ENCODE measurements at regions of chr16 and their contacts with region 1.

Region 1: DNA sequence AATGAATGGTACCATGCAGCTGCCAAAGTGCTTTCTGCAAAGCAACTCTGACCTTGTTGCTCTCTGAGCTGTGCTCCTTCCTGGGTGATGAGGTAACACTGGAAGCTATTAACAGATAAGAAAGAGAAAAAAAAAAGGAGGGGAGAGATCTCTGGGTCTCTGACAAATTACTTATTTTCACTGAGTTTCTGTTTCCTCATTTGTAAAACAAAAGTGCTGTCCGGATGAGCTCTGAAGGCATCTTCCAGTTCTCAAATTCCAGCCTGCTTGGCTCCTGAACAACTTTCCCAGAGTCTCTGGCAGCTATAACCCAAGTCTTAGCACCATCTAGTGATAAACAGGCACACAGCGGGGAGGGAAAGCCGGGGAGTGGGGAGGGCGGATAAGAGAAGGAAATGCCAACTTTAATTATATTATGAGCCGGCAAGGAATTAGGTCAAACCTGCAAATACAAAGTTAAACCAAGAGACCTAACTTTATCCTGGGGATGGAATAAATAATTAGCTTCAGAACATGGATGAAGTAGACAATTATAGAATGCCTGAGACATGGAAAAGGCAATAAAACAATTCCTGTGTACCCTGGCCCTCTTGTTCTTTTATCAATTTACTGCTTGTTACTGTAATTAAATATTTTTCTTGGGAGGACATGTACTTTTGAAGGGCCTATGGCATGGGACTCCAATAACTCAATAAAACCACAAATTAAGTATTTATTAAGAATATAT is 61.3 kb upstream of the KIFC3 start:
- DNase-seq: peak; percentile 83
- H3K4me3 ChIP-seq: no peak overlapping the region
- H3K27ac ChIP-seq: no peak overlapping the region
- H3K4me1 ChIP-seq: peaks cover 0 to 7% (median 3%) of the 10 kb centered on the region in 4 donors
- H3K27me3 ChIP-seq: no peaks in the 10 kb centered on the region
- CTCF ChIP-seq: peak in 3 of 4 experiments; percentile 33 to 61 (median 33)
- EP300 ChIP-seq: no peak
- POLR2A ChIP-seq: no peak

Region 2: GRCh38 chr16:57576429-57576870 is 287.1 kb before region 1 on chr16:
- intact Hi-C with region 1: loop called (anchors 2 kb)
- DNase-seq: peak; percentile 78
- H3K4me3 ChIP-seq: no peak overlapping the region
- H3K27ac ChIP-seq: no peak overlapping the region
- H3K4me1 ChIP-seq: peaks cover 0 to 4% (median 0%) of the 10 kb centered on the region in 4 donors
- H3K27me3 ChIP-seq: peaks cover 3 to 21% (median 5%) of the 10 kb centered on the region in 3 donors
- CTCF ChIP-seq: peak; percentile 64 to 93 (median 84)
- EP300 ChIP-seq: no peak
- POLR2A ChIP-seq: no peak

Region 3: GRCh38 chr16:57757326-57757786 is 106.2 kb before region 1 on chr16:
- intact Hi-C with region 1: loop called (anchors 1 kb)
- DNase-seq: peak; percentile 89
- H3K4me3 ChIP-seq: no peak overlapping the region
- H3K27ac ChIP-seq: peak overlapping the region in 1 of 4 donors; percentile 42
- H3K4me1 ChIP-seq: peaks cover 0 to 9% (median 2%) of the 10 kb centered on the region in 4 donors
- H3K27me3 ChIP-seq: no peaks in the 10 kb centered on the region
- CTCF ChIP-seq: peak; percentile 68 to 97 (median 87)
- EP300 ChIP-seq: no peak
- POLR2A ChIP-seq: no peak

Region 4: GRCh38 chr16:57775661-57776469 is 87.7 kb before region 1 on chr16:
- intact Hi-C with region 1: no loop called
- DNase-seq: no peak
- H3K4me3 ChIP-seq: no peak overlapping the region
- H3K27ac ChIP-seq: no peak overlapping the region
- H3K4me1 ChIP-seq: no peaks in the 10 kb centered on the region
- H3K27me3 ChIP-seq: no peaks in the 10 kb centered on the region
- CTCF ChIP-seq: no peak
- EP300 ChIP-seq: no peak
- POLR2A ChIP-seq: no peak

Region 5: DNA sequence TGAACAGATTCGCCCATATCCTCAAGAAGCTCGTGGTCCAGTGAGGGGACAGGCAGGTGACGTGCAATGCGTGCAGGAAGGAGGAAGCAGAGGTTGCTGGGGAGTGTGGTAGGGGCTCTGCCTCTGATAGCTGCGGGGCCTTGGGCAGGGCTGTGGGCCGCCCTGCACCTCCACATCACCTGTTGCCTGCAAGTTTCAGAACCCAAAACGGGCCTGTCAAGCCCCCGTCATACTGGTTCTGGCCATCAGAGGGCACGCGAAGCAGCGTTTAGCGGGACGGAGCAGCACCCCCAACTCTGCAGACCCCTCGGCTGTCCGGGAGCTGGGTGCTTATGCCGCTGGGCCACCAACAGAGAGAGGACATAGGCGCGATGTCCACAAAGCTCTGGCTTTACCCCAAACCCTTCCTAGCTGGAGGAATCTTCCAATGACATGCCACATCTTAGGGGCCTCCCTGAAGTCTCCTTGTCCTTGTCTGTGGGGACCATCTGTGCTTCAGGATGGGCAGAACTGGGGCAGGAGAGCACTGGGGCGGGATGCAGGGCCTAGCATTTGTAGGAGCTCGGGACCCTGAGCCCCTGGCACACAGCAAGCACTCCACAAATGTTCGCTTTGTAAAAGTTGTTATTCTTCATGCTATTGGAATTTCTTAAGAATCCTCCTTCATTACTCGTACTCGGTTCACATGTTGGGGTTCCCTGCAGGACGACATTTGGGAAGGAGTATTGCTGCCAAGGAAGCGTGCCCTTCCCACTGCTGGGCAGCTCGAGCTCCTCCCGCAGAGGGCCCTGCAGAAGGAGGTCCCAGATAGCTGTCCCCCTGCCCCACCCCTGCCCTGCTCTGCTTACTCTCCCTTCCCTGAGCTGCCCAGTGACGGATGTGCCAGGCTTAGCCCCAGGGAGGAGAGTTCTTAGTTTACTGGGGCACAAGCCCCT is 43.1 kb after region 1 on chr16:
- intact Hi-C with region 1: no loop called
- DNase-seq: no peak
- H3K4me3 ChIP-seq: no peak overlapping the region
- H3K27ac ChIP-seq: no peak overlapping the region
- H3K4me1 ChIP-seq: no peaks in the 10 kb centered on the region
- H3K27me3 ChIP-seq: peaks cover 0 to 33% (median 9%) of the 10 kb centered on the region in 3 donors
- CTCF ChIP-seq: peak in 2 of 4 experiments; percentile 26 to 30
- EP300 ChIP-seq: no peak
- POLR2A ChIP-seq: no peak

Region 6: GRCh38 chr16:57916735-57917451 is 53.3 kb after region 1 on chr16:
- intact Hi-C with region 1: no loop called
- DNase-seq: no peak
- H3K4me3 ChIP-seq: no peak overlapping the region
- H3K27ac ChIP-seq: no peak overlapping the region
- H3K4me1 ChIP-seq: no peaks in the 10 kb centered on the region
- H3K27me3 ChIP-seq: no peaks in the 10 kb centered on the region
- CTCF ChIP-seq: no peak
- EP300 ChIP-seq: no peak
- POLR2A ChIP-seq: no peak

Measured in sigmoid colon (tissue), 7 donors.